ENCODE measurements at regions of chr6 and their contacts with region 1.

Region 1: GRCh38 chr6:98845211-98846020 is 11.0 kb downstream of the POU3F2 start:
- DNase-seq: peak; percentile 78
- CTCF ChIP-seq: peak; percentile 85

Region 2: GRCh38 chr6:98832284-98833056 is 12.9 kb before region 1 on chr6:
- CTCF ChIA-PET with region 1: interaction called, 31 read pairs
- POLR2A ChIA-PET with region 1: no interaction called
- DNase-seq: peak; percentile 18
- CTCF ChIP-seq: no peak

Region 3: GRCh38 chr6:98871057-98871456 is 25.6 kb after region 1 on chr6:
- CTCF ChIA-PET with region 1: no interaction called
- POLR2A ChIA-PET with region 1: no interaction called
- DNase-seq: no peak
- CTCF ChIP-seq: no peak